ENCODE measurements at regions of chr1 and their contacts with region 1.

Region 1: DNA sequence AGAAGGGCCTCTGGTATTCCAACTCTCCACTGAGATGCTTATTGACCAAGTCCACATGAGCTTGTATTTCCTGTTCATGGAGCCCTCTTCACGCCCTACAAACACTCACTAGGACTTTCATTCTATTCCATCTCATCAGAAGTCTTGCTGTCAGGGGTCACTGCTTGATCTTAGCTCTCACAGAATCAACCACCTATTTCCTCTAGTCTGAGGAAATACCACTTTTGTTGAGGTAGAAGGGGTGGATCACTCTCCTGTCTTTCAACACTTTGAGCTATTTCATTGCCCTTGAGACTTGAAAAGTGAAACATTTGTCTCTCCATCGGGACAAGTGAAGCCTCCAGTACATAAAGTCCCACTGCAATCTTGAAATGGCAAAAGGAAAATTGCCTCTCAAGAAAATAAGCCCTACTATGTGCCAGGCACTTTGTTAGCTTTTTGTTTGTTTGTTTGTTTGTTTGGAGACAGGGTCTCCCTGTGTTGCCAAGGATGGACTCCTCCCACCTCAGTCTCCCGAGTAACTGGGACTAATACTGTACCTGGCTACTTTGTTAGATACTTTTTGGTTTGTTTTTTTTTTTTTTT is 19.8 kb upstream of the FAM110D start:
- DNase-seq: no peak
- ATAC-seq: peak; percentile 95
- H3K4me3 Mint-ChIP-seq: peak overlapping the region; percentile 72
- H3K27ac Mint-ChIP-seq: peak overlapping the region; percentile 82
- H3K4me1 Mint-ChIP-seq: peaks cover 14% of the 10 kb centered on the region
- H3K27me3 Mint-ChIP-seq: peaks cover 7% of the 10 kb centered on the region

Region 2: GRCh38 chr1:25922056-25922969 is 216.8 kb before region 1 on chr1:
- POLR2A ChIA-PET with region 1: no interaction called
- DNase-seq: peak; percentile 74
- ATAC-seq: peak; percentile 83
- H3K4me3 Mint-ChIP-seq: peak overlapping the region; percentile 86
- H3K27ac Mint-ChIP-seq: peak overlapping the region; percentile 72
- H3K4me1 Mint-ChIP-seq: peaks cover 21% of the 10 kb centered on the region
- H3K27me3 Mint-ChIP-seq: peaks cover 41% of the 10 kb centered on the region

Region 3: DNA sequence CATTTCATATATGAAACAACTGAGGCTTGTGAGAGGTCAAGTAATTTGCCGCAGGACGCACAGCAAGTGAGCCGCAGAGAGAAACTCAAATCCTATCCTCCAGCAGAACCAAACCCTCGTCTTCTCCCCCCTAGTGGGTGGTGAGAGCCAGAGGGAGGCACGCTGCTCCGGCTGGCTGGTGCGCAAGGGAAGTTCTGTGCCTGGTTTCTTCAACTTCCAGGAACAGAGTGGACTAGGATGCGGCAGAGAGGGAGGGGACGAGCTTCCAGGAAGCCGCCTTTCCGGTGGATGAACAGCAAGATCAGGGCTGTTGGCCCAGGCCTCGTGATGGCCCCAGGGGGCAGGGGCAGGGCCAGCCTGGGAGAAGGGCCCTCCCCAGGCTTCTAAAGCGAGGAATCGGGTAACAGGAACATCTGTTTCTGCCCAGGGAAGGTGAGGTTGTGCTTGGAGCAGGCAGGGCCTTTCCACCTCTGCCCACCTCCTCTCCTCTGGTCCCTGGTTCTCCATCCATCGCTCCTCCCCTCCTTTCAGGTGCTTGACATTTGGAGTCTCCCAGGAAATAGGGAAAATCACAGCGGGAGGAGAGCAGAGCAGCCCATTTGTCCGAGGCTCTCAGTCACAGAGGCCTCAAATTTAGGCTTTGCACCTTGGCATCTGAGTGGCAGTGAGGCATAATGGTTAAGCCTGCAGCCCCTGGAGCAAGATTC is 44.2 kb before region 1 on chr1:
- POLR2A ChIA-PET with region 1: no interaction called
- DNase-seq: no peak
- ATAC-seq: no peak
- H3K4me3 Mint-ChIP-seq: no peak overlapping the region
- H3K27ac Mint-ChIP-seq: no peak overlapping the region
- H3K4me1 Mint-ChIP-seq: peaks cover 5% of the 10 kb centered on the region
- H3K27me3 Mint-ChIP-seq: peaks cover 50% of the 10 kb centered on the region

Region 4: DNA sequence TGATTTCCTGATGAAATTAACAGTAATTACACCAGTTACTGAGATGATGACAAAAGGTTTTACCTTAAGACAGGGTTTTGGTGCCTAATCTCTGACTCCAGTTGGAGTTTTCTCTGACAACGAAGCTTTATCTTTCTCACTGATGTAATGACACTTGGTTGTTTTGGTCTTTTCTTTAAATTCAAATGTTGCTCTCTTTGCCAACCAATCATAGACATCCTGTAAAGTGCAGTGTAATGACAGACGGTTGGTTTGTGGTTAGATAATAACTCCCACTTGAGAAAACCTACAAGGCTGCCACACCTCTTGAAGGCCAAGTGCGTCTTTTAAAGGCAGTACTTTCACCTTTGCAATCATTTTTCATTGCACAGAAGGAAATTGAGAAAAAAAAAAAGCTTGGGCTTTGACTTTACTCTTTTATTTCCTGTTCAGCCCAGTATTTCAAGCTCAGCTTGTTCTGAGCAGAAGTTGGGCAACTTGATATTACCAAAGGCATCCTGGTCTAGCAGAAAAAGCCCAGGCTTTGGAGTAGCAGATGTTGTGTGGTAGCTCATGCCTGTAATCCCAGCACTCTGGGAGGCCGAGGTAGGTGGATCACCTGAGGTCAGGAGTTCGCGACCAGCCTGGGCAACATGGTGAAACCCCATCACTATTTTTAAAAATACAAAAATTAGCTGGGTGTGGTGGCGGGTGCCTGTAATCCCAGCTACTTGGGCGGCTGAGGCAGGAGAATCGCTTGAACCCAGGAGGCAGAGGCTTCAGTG is 12.6 kb before region 1 on chr1:
- POLR2A ChIA-PET with region 1: interaction called, 73 read pairs
- DNase-seq: peak; percentile 42
- ATAC-seq: peak; percentile 97
- H3K4me3 Mint-ChIP-seq: peak overlapping the region; percentile 83
- H3K27ac Mint-ChIP-seq: peak overlapping the region; percentile 96
- H3K4me1 Mint-ChIP-seq: peaks cover 38% of the 10 kb centered on the region
- H3K27me3 Mint-ChIP-seq: no peaks in the 10 kb centered on the region